ENCODE measurements at regions of chr14 and their contacts with region 1.

Region 1: GRCh38 chr14:68816262-68816942 is 23.5 kb upstream of the ZFP36L1 start:
- DNase-seq: peak; percentile 90
- H3K4me3 Mint-ChIP-seq: peak overlapping the region; percentile 76
- H3K27ac Mint-ChIP-seq: peak overlapping the region; percentile 95
- H3K4me1 Mint-ChIP-seq: peaks cover 69% of the 10 kb centered on the region
- H3K27me3 Mint-ChIP-seq: no peaks in the 10 kb centered on the region

Region 2: GRCh38 chr14:67816326-67817002 is 999.9 kb before region 1 on chr14 and contains the start of gene ZFYVE26:
- CTCF ChIA-PET with region 1: no interaction called
- intact Hi-C with region 1: loop called (anchors 5 kb)
- DNase-seq: peak; percentile 96
- H3K4me3 Mint-ChIP-seq: peak within 1 kb of the TSS; percentile 95
- H3K27ac Mint-ChIP-seq: peak within 1 kb of the TSS; percentile 91
- H3K4me1 Mint-ChIP-seq: peaks cover 46% of the 10 kb centered on the region
- H3K27me3 Mint-ChIP-seq: no peaks in the 10 kb centered on the region
- total RNA-seq, gene ZFYVE26: 11.7 to 12.1 TPM

Region 3: GRCh38 chr14:68210729-68211299 is 605.6 kb before region 1 on chr14:
- CTCF ChIA-PET with region 1: no interaction called
- intact Hi-C with region 1: loop called (anchors 1 kb)
- DNase-seq: peak; percentile 74
- H3K4me3 Mint-ChIP-seq: peak overlapping the region; percentile 11
- H3K27ac Mint-ChIP-seq: peak overlapping the region; percentile 57
- H3K4me1 Mint-ChIP-seq: peaks cover 48% of the 10 kb centered on the region
- H3K27me3 Mint-ChIP-seq: no peaks in the 10 kb centered on the region

Region 4: GRCh38 chr14:68408680-68409079 is 407.7 kb before region 1 on chr14:
- CTCF ChIA-PET with region 1: interaction called, 3 read pairs
- intact Hi-C with region 1: loop called (anchors 10 kb)
- DNase-seq: peak; percentile 34
- H3K4me3 Mint-ChIP-seq: no peak overlapping the region
- H3K27ac Mint-ChIP-seq: no peak overlapping the region
- H3K4me1 Mint-ChIP-seq: peaks cover 25% of the 10 kb centered on the region
- H3K27me3 Mint-ChIP-seq: no peaks in the 10 kb centered on the region

Region 5: GRCh38 chr14:68637106-68638021 is 179.0 kb before region 1 on chr14:
- CTCF ChIA-PET with region 1: no interaction called
- intact Hi-C with region 1: no loop called
- DNase-seq: peak; percentile 44
- H3K4me3 Mint-ChIP-seq: no peak overlapping the region
- H3K27ac Mint-ChIP-seq: no peak overlapping the region
- H3K4me1 Mint-ChIP-seq: no peaks in the 10 kb centered on the region
- H3K27me3 Mint-ChIP-seq: no peaks in the 10 kb centered on the region

Region 6: GRCh38 chr14:68766299-68767230 is 49.8 kb before region 1 on chr14:
- CTCF ChIA-PET with region 1: interaction called, 3 read pairs
- intact Hi-C with region 1: loop called (anchors 1 kb)
- DNase-seq: no peak
- H3K4me3 Mint-ChIP-seq: no peak overlapping the region
- H3K27ac Mint-ChIP-seq: peak overlapping the region; percentile 55
- H3K4me1 Mint-ChIP-seq: peaks cover 30% of the 10 kb centered on the region
- H3K27me3 Mint-ChIP-seq: no peaks in the 10 kb centered on the region

Region 7: DNA sequence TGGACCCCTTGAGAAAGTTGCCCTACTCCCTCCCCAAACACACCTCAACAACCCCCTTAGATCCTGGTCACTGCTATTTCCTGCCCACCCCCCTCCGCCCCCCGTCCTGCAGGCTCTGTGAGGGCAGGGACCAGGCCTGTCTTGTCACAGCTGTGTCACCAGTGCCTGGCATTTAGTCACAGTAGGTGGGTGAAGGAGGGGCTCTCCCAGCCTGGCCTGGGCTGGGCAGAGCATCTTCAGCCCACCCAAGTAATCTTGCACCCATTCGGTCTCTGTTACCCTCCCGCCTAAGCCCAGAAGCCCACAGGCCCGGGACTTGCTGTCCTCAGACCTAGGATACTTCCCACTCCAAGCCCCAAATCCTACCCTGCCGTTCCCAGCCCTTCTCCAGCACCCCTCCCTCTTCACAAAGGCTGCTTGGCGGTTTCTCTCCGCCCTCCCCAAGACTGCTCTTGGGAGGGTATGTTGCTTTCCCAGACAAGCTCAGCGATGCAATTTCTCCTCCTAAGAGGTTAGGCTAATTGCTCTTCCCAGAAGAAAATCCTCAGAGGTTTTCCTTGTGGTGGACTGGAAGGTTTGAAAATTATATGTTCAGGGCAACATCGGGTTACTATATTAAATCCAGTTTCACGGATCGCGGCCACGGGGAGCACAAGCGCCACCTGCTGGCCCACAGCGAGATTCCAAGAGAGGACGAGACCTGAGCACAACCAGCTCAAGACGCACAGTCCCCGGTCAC is 27.2 kb after region 1 on chr14:
- CTCF ChIA-PET with region 1: interaction called, 18 read pairs
- intact Hi-C with region 1: loop called (anchors 2 kb)
- DNase-seq: peak; percentile 86
- H3K4me3 Mint-ChIP-seq: no peak overlapping the region
- H3K27ac Mint-ChIP-seq: no peak overlapping the region
- H3K4me1 Mint-ChIP-seq: peaks cover 23% of the 10 kb centered on the region
- H3K27me3 Mint-ChIP-seq: no peaks in the 10 kb centered on the region

Measured in activated naive CD4-positive, alpha-beta T cell treated with anti-CD3 and anti-CD28 coated beads for 36 hours (primary cell).